Heart right ventricle (tissue), 16 donors: ENCODE measurements at regions of chr11 and their contacts with region 1.

Region 1: DNA sequence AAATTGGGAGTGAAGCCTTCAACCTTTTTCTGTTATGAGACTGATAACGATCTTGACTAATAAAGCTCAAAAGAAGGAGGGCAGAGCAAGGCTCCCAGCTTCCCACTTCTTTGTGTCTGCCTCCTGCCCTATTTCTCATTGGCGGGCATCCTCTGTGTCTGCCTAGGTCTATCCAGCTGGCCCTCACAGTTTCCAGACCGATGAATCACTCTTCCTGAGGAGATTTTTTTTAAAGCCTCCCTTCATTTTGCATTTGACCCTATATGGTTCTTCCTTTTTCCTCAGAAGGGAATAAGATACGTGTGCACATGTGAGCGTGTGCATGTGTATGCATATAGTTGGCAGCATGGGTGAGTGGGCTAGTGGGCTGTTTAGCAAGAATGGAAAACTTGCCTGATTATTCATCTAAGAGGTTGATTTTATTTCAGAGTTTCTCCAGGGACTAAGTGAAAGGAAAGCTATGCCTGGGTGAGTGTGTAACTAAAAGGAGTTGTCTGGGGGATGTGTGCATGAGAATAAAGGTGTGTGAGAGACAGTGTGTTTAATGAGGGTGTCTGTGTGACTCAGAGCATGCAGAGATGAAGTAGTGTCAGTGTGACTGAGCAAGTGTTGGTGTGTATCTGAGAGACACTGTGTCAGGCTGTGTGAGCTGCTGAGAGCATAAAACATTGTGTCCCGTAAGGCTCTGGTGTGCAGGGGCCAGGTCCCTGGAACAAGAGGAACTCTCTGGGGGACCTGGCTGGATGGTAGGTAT is 12.2 kb downstream of the PHLDB1 start:
- DNase-seq: peak in 1 of 2 donors; percentile 77
- ATAC-seq: peak in 7 of 8 donors; percentile 7 to 46 (median 26)
- H3K4me3 ChIP-seq: peak overlapping the region in 1 of 10 donors; percentile 4
- H3K27ac ChIP-seq: peak overlapping the region; percentile 70 to 96 (median 90)
- H3K4me1 ChIP-seq: peaks cover 46 to 100% (median 79%) of the 10 kb centered on the region in 9 donors
- H3K27me3 ChIP-seq: peaks cover 0 to 16% (median 0%) of the 10 kb centered on the region in 7 donors
- CTCF ChIP-seq: no peak

Region 2: DNA sequence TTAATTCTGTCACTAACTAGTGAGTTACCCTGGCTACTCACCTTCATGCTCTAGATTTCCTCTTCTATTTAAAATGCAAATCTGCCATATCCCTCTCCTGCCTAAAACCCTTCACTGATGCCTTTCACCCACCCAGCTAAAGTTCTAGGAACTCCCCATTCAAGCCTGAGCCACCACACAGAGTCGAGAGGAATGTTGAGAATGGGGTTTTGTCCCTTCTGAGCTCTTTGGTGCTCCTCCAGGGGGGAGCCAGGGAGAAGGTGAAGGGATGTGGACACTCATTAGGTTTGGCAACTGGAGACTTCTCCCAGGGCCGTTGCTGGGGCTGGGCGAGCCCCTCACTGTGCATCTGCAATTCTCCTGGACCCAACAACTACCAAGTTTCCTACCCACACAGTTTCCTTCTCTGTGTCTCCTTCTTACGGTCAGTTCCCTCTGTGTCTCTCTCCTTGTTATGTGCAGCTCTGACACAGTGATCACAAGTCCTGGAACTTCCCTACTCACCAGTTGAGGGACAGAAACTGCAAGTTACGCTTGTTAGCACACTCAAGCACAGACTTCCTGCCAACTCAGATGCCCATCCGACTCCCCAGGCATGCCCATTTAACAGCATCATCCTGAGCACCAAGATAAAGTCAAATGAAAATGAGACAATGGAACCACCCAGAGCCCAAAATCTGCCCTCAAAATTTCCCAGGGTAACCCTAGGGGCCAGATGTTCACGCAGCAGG is 640.0 kb before region 1 on chr11:
- intact Hi-C with region 1: loop called in 1 of 10 experiments (anchors 5 kb)
- DNase-seq: no peak
- ATAC-seq: peak in 7 of 8 donors; percentile 58 to 81 (median 65)
- H3K4me3 ChIP-seq: no peak overlapping the region
- H3K27ac ChIP-seq: peak overlapping the region in 4 of 10 donors; percentile 3 to 89 (median 24)
- H3K4me1 ChIP-seq: peaks cover 0 to 52% (median 4%) of the 10 kb centered on the region in 9 donors
- H3K27me3 ChIP-seq: peaks cover 0 to 10% (median 0%) of the 10 kb centered on the region in 7 donors
- CTCF ChIP-seq: no peak

Region 3: GRCh38 chr11:118572061-118572980 is 47.3 kb before region 1 on chr11 and contains the start of gene ARCN1:
- intact Hi-C with region 1: no loop called
- DNase-seq: peak; percentile 80 to 81
- ATAC-seq: peak; percentile 86 to 94 (median 90)
- H3K4me3 ChIP-seq: peak within 1 kb of the TSS; percentile 88 to 99 (median 97)
- H3K27ac ChIP-seq: peak within 1 kb of the TSS; percentile 90 to 100 (median 98)
- H3K4me1 ChIP-seq: peaks cover 7 to 53% (median 40%) of the 10 kb centered on the region in 9 donors
- H3K27me3 ChIP-seq: no peaks in the 10 kb centered on the region
- CTCF ChIP-seq: no peak
- total RNA-seq, gene ARCN1: 84.8 to 122 (median 98.3) TPM